PC-3 (cell line): ENCODE measurements at regions of chr15 and their contacts with region 1.

Region 1: GRCh38 chr15:47439146-47440111 is 277.9 kb upstream of the SEMA6D start:
- DNase-seq: peak; percentile 70
- ATAC-seq: peak; percentile 73
- H3K4me3 ChIP-seq: peak overlapping the region; percentile 29; the same call in 1 of the 2 replicates
- H3K27ac ChIP-seq: peak overlapping the region; percentile 90
- H3K4me1 ChIP-seq: peaks cover 51% of the 10 kb centered on the region
- H3K27me3 ChIP-seq: no peaks in the 10 kb centered on the region
- CTCF ChIP-seq: no peak

Region 2: DNA sequence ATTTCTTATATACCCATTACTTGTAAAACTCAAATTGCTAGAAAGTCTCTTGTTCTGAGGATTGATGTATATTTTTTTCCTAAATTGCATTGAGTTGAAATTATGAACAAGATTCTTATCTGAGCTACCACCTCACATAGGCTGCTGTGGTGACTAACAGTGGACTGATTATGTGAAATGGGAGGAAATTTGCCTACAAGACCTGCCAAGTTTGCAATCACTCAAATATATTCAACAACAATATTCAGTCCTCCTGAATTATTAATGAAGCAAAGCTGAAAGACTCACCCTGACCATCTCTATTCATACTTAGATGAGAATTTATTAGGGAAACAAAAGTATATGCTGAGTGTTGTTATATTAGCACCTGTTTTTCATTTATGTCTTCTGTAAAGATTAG is 134.8 kb before region 1 on chr15:
- CTCF ChIA-PET with region 1: no interaction called
- POLR2A ChIA-PET with region 1: no interaction called
- intact Hi-C with region 1: no loop called
- DNase-seq: no peak
- ATAC-seq: no peak
- H3K4me3 ChIP-seq: no peak overlapping the region
- H3K27ac ChIP-seq: no peak overlapping the region
- H3K4me1 ChIP-seq: no peaks in the 10 kb centered on the region
- H3K27me3 ChIP-seq: no peaks in the 10 kb centered on the region
- CTCF ChIP-seq: no peak

Region 3: GRCh38 chr15:47422901-47423665 is 16.3 kb before region 1 on chr15:
- CTCF ChIA-PET with region 1: no interaction called
- POLR2A ChIA-PET with region 1: no interaction called
- intact Hi-C with region 1: loop called (anchors 2 kb)
- DNase-seq: peak; percentile 19
- ATAC-seq: peak; percentile 97
- H3K4me3 ChIP-seq: no peak overlapping the region
- H3K27ac ChIP-seq: peak overlapping the region; percentile 8; the same call in 1 of the 2 replicates
- H3K4me1 ChIP-seq: peaks cover 15% of the 10 kb centered on the region
- H3K27me3 ChIP-seq: no peaks in the 10 kb centered on the region
- CTCF ChIP-seq: no peak

Region 4: GRCh38 chr15:47466351-47466750 is 26.9 kb after region 1 on chr15:
- CTCF ChIA-PET with region 1: no interaction called
- POLR2A ChIA-PET with region 1: no interaction called
- intact Hi-C with region 1: loop called (anchors 1 kb)
- DNase-seq: peak; percentile 82
- ATAC-seq: peak; percentile 83
- H3K4me3 ChIP-seq: no peak overlapping the region; the same call in 1 of the 2 replicates
- H3K27ac ChIP-seq: peak overlapping the region; percentile 77
- H3K4me1 ChIP-seq: peaks cover 9% of the 10 kb centered on the region; the same call in 1 of the 2 replicates
- H3K27me3 ChIP-seq: no peaks in the 10 kb centered on the region
- CTCF ChIP-seq: no peak